Ovary (tissue), 10 donors: ENCODE measurements at regions of chr10 and their contacts with region 1.

Region 1: DNA sequence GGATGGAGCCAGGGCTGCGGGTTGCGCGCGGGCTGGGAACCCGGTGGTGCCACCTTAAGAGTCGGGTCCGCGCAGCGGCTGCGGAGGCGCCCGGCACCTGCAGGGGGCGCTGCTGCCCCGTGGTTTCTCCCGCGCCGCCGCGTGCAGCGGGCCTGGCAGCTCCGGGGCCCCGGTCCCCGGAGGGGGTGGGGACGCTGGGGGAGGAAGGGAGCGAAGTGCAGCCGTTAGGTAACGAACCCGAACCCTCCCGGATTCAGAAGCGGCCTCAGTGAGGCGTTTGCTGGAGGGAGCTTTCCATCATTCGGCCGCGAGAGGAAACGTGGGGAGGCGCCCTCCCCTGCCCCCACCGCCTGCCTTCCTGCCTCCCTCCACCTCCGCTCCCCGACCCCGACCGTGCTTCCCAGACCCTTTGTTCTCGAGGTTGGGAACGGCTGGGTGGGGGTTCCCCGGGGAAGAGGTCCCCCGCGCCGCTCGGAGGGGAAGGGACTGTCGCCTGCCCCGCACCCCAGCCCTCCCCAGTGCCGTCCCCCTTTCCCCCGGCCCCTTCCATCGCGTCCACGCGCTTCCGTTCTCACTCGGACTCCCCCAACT is 29.6 kb downstream of the SKIDA1 start:
- DNase-seq: peak; percentile 86 to 95 (median 90)
- H3K4me3 ChIP-seq: peak overlapping the region; percentile 66
- H3K27ac ChIP-seq: peak overlapping the region; percentile 15 to 70
- H3K4me1 ChIP-seq: no peaks in the 10 kb centered on the region
- H3K27me3 ChIP-seq: no peaks in the 10 kb centered on the region
- CTCF ChIP-seq: peak; percentile 96 to 98 (median 96)
- EP300 ChIP-seq: no peak
- POLR2A ChIP-seq: peak; percentile 27

Region 2: DNA sequence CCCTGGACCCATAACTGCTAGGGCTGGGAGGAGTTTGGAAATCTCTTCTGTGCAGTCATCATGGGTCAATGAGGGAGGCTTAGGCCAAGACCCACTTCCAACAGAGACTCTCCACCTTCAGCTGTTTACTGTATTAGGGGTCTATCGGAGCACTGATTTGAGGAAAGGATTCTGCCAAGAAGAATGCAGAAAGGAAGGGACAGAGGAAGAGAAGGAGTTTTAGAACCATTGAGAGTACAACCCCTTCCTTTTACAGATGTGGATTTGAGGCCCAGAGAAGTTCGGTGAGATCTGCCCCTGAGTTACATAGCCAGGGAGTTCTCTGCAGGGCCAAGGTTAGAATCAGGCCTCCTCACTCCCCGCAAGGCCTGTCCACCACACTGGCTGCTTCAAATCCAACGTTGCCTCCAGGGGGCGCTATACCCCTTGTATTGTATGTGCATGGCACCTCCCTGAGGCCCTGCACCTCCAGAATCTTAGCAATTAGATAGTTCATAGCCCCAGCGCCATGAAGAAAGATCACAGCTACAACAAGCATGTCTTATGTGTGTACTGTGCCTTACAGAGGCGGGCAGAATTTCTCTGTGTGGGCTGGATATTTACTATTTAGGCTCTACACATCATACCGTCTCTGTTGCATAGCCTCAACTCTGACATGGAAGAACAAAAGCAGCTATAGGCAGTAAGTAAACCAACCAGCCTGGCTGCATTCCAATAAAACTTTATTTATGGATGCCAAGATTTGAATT is 217.2 kb before region 1 on chr10:
- intact Hi-C with region 1: loop called (anchors 2 to 10 kb)
- DNase-seq: peak; percentile 94 to 97 (median 95)
- H3K4me3 ChIP-seq: no peak overlapping the region
- H3K27ac ChIP-seq: no peak overlapping the region
- H3K4me1 ChIP-seq: peaks cover 4% of the 10 kb centered on the region
- H3K27me3 ChIP-seq: no peaks in the 10 kb centered on the region
- CTCF ChIP-seq: peak; percentile 64 to 82 (median 65)
- EP300 ChIP-seq: no peak
- POLR2A ChIP-seq: no peak

Region 3: DNA sequence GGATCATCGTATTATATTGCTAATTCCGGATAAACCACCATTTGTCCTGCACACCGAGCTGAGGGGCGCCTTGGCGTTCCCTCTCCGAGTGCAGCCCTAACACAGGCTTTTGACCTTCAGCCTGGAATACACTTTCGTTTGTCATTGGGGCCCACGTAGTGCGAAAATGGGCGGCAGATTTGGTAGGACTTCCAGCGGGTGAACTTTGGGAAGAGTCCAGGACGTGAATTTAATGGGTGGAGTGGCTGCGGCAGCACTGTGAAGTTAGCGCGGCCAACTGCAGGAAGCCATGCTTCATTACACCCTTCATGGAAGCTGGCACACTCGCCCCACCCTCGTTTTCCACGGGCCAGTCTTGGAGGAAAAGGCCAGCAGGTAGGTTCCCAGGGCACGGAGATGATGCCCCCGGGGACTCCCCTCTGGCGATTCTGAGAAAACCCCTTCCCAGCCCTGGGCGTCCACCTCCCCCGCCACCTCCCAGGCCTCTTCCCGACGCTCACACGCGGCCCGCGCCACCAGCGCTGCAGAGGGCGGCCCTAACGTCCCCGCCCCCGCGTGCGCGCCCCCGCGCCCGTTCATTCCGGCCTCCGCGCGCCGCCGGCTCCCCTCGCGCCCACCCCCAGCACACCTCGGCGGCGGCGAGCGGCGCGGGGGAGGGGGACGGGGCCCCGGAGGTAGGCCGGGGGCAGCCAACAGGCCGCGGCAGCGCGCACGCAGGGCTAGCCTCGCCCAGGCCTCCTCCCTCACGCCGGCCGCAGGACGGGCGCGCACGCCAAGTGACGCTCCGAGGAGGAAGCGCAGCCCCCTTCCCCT is 37.8 kb after region 1 on chr10 and contains the start of gene MLLT10:
- intact Hi-C with region 1: loop called in 1 of 4 experiments (anchors 5 kb)
- DNase-seq: peak; percentile 94 to 98 (median 96)
- H3K4me3 ChIP-seq: peak within 1 kb of the TSS; percentile 70
- H3K27ac ChIP-seq: peak within 1 kb of the TSS; percentile 89 to 90
- H3K4me1 ChIP-seq: peaks cover 3% of the 10 kb centered on the region
- H3K27me3 ChIP-seq: no peaks in the 10 kb centered on the region
- CTCF ChIP-seq: peak in 2 of 3 donors; percentile 50 to 60
- EP300 ChIP-seq: no peak
- POLR2A ChIP-seq: peak; percentile 87
- total RNA-seq, gene MLLT10: 32.3 to 55.1 (median 43.7) TPM

Region 4: GRCh38 chr10:21953585-21954057 is 457.8 kb after region 1 on chr10:
- intact Hi-C with region 1: loop called in 1 of 4 experiments (anchors 10 kb)
- DNase-seq: no peak
- H3K4me3 ChIP-seq: no peak overlapping the region
- H3K27ac ChIP-seq: no peak overlapping the region
- H3K4me1 ChIP-seq: no peaks in the 10 kb centered on the region
- H3K27me3 ChIP-seq: no peaks in the 10 kb centered on the region
- CTCF ChIP-seq: no peak
- EP300 ChIP-seq: no peak
- POLR2A ChIP-seq: no peak

Region 5: GRCh38 chr10:22325272-22326144 is 829.7 kb after region 1 on chr10:
- intact Hi-C with region 1: loop called in 1 of 4 experiments (anchors 10 kb)
- DNase-seq: peak; percentile 78 to 88 (median 86)
- H3K4me3 ChIP-seq: peak overlapping the region; percentile 55
- H3K27ac ChIP-seq: peak overlapping the region; percentile 22 to 33
- H3K4me1 ChIP-seq: peaks cover 3% of the 10 kb centered on the region
- H3K27me3 ChIP-seq: no peaks in the 10 kb centered on the region
- CTCF ChIP-seq: no peak
- EP300 ChIP-seq: no peak
- POLR2A ChIP-seq: no peak